ENCODE measurements at regions of chr1 and their contacts with region 1.

Region 1: DNA sequence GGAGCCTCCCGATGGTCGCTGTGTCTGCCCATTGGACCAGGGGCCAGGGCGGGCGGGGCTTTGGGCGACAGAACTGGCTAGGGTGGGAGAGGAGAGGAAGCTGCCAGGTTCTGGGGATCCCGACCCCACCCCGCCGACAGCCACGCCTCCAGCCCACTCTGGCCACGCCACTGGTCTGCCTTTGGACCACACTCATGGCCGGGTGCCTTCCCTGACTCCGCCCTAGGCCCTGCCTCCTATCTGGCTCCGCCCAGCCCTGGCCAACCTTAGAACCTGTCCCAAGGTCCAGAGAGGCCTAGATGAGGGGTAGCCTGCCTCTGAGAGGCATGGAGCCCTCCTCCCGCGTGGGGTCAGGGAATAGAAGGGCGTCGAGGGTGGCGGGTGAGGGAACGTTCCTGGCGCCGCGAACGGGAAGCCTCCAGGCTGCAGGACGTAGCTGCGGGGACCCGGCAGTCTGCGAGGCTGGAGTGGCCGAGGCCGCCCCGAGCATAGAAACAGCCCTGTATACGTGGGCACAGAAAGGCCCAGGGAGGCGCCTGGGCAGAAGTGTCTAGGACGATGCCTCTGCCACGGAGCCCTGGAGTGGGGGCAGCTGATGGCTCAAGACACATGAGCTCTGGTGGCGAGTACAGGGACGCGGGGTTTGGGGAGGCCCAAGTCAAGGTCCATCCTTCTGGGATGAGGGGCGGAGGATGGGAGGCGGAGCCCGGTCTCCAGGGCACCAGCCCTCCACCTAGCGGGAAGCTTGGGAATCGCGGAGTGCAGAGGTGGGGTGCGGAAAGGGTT is 11.5 kb upstream of the COL16A1 start:
- DNase-seq: peak; percentile 96
- ATAC-seq: peak; percentile 95 to 98 (median 96)
- H3K4me3 ChIP-seq: peak overlapping the region; percentile 31 to 65 (median 50)
- H3K27ac ChIP-seq: peak overlapping the region; percentile 90 to 99 (median 92)
- H3K4me1 ChIP-seq: peaks cover 10 to 45% (median 29%) of the 10 kb centered on the region in 9 donors
- H3K27me3 ChIP-seq: peaks cover 0 to 28% (median 0%) of the 10 kb centered on the region in 7 donors
- CTCF ChIP-seq: peak; percentile 79 to 98 (median 92)

Region 2: DNA sequence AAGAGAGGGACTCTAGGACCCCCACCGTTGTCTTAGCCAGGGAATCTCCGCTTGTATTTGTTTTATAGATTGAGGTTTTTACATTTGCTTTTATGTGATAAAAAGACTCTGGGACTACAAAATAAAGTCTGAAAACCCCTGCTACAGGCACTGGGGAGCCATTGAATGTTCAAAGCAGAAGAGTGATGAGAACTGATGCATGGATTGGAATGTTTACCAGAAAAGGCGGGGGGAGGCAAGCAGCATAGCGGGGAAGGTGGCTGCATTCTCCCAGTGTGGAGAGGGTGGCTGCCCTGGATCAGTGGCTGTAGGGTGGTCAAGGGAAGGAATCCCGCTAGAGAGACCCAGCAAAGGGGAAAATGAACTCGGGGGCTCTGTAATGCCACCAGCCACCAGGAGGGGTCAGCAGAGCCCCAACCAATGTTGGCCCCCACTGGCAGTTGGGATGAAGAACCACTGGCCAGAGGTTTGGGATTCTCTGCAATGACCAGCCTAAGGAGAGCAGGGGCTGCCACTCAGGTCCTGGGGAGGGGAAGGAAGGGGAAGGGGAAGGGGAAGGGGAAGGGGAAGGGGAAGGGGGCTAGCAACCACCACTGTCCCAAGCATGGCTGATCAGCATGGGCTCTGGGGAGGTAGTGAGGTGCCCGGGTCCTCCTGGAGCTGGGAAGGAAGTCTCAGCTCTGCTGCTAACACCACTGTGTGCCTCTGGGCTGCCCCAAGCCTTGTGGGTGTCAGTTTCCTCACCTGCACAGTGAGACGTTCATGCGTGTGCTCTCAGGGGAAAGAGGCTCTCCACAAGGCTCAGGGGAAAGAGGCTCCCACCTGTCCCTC is 51.4 kb before region 1 on chr1:
- intact Hi-C with region 1: loop called in 6 of 10 experiments (anchors 1 to 10 kb)
- DNase-seq: peak; percentile 62 to 69
- ATAC-seq: peak in 7 of 8 donors; percentile 33 to 66 (median 52)
- H3K4me3 ChIP-seq: no peak overlapping the region
- H3K27ac ChIP-seq: no peak overlapping the region
- H3K4me1 ChIP-seq: peaks cover 6 to 26% (median 15%) of the 10 kb centered on the region in 9 donors
- H3K27me3 ChIP-seq: no peaks in the 10 kb centered on the region
- CTCF ChIP-seq: peak; percentile 83 to 92 (median 89)

Region 3: DNA sequence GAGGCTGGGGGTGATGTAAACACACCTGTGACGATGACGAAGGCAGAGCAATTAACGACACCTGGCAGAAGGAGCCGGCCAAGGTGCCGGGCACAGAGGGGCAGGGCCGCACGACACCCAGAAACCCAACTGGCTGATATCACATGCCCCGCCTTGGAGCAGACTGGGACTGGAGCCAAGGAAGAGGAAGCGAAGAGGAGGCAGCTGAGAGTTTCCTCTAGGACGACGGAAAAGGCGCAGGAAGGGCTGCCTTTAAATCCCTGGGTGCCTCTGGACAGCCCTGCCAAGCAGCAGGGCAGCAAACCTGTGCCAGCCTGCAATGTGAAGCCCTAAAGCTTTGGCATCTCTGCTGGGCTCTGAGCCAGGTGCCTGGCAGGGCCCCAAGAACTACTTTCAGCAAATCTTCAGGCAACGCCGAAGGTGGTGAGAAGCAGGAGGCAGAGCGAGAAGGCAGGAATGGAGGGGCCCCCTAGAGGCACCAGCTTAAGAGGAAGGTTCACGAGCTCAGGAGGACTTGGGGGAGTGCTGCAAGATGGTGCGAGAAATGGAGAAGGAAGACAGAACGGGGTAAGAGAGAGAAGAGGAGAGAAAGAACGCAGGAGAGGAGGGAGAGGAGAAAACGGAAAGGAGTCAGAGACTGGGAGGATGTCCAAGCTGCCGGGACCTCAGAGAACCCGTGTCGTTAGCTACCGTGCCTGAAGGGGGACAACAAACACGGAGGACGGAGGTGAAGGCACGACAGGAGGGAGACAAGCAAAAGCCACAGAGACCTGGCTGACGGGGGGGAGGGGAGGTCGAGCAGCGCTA is 45.3 kb before region 1 on chr1:
- intact Hi-C with region 1: loop called in 9 of 10 experiments (anchors 2 to 10 kb)
- DNase-seq: peak; percentile 83
- ATAC-seq: peak; percentile 31 to 76 (median 68)
- H3K4me3 ChIP-seq: peak overlapping the region in 9 of 10 donors; percentile 6 to 53 (median 41)
- H3K27ac ChIP-seq: peak overlapping the region; percentile 13 to 87 (median 66)
- H3K4me1 ChIP-seq: peaks cover 35 to 81% (median 72%) of the 10 kb centered on the region in 9 donors
- H3K27me3 ChIP-seq: peaks cover 0 to 17% (median 0%) of the 10 kb centered on the region in 7 donors
- CTCF ChIP-seq: peak in 5 of 9 donors; percentile 7 to 42 (median 21)

Region 4: GRCh38 chr1:31701137-31701736 is 14.0 kb before region 1 on chr1:
- intact Hi-C with region 1: loop called in 1 of 10 experiments (anchors 2 kb)
- DNase-seq: peak; percentile 78 to 89
- ATAC-seq: peak; percentile 22 to 79 (median 62)
- H3K4me3 ChIP-seq: peak overlapping the region in 3 of 10 donors; percentile 5 to 13 (median 7)
- H3K27ac ChIP-seq: peak overlapping the region in 9 of 10 donors; percentile 54 to 90 (median 77)
- H3K4me1 ChIP-seq: peaks cover 17 to 68% (median 39%) of the 10 kb centered on the region in 9 donors
- H3K27me3 ChIP-seq: peaks cover 0 to 23% (median 0%) of the 10 kb centered on the region in 7 donors
- CTCF ChIP-seq: no peak

Region 5: DNA sequence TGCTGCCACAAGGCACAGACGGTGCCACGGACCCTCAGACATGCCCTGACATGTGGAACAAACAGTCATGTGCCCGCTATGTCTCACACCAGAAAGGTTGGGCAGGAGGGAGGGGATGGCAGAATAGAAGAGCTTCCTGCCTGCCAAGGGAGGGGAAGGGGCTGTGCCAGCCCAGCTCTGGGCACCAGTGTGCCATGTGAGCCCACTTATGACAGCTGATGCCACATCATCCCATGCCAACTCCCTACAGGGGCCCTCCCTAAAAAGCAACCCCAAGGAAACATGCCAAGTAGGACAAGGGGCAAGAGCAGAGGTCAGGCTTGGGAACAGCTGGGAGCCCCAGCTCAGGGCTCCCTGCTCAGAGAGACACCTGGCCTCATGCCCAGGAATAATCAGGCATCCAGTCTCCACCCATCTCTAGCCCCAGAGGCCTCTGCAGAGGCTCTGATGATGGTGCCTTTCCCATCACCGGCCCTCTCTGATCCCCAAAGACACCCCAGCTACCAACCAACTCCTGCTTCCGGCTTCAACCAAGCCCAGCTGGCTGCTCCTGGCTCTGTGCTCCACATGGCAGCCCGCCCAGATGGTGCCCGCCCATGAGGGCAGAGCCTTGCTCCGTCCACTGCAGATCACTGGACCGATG is 38.5 kb after region 1 on chr1:
- intact Hi-C with region 1: loop called in 2 of 10 experiments (anchors 5 kb)
- DNase-seq: peak; percentile 56 to 65
- ATAC-seq: peak; percentile 44 to 78 (median 66)
- H3K4me3 ChIP-seq: no peak overlapping the region
- H3K27ac ChIP-seq: peak overlapping the region in 8 of 10 donors; percentile 20 to 73 (median 49)
- H3K4me1 ChIP-seq: peaks cover 11 to 68% (median 52%) of the 10 kb centered on the region in 9 donors
- H3K27me3 ChIP-seq: no peaks in the 10 kb centered on the region
- CTCF ChIP-seq: no peak

Region 6: DNA sequence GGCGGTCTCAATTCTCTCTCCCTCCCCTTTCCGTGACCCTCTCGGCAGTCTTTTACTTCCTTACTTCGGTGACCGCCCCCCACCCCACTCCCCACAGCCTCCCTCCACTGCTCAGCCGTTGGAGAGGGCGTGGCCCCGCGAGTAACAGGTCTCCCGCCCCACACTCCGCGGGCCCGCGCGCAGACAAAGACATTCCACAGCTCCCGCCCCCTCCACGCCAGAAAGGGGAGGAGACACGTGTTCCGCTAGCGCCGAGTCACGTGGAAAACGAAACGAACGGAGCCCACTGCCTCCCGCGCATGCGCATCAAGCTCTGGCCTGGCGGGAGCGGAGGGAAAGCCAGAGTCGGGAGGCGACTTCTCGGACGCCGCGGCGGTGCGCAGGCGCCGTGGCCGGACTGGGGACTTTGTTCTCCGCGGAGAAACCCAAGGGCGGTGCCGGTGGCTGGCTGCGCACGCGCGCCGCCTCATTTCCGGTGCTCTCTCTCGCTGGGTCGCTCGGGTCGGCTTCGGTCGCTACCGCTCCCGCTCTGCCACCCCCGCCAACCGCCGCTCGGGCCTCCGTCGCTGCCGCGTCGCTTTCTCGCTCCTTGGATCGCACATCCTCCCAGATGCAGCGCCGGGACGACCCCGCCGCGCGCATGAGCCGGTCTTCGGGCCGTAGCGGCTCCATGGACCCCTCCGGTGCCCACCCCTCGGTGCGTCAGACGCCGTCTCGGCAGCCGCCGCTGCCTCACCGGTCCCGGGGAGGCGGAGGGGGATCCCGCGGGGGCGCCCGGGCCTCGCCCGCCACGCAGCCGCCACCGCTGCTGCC is 298.3 kb after region 1 on chr1 and contains the start of gene KHDRBS1:
- intact Hi-C with region 1: loop called in 1 of 10 experiments (anchors 1 kb)
- DNase-seq: peak; percentile 99
- ATAC-seq: peak; percentile 95 to 98 (median 96)
- H3K4me3 ChIP-seq: peak within 1 kb of the TSS; percentile 76 to 100 (median 96)
- H3K27ac ChIP-seq: peak within 1 kb of the TSS; percentile 93 to 100 (median 100)
- H3K4me1 ChIP-seq: peaks cover 0 to 50% (median 45%) of the 10 kb centered on the region in 9 donors
- H3K27me3 ChIP-seq: no peaks in the 10 kb centered on the region
- CTCF ChIP-seq: no peak
- total RNA-seq, gene KHDRBS1: 64.6 to 78.3 (median 67.1) TPM